Posterior vena cava (tissue), 2 donors: ENCODE measurements at regions of chr7 and their contacts with region 1.

Region 1: GRCh38 chr7:149005241-149006050 is 22.9 kb downstream of the PDIA4 start:
- DNase-seq: peak; percentile 94

Region 2: DNA sequence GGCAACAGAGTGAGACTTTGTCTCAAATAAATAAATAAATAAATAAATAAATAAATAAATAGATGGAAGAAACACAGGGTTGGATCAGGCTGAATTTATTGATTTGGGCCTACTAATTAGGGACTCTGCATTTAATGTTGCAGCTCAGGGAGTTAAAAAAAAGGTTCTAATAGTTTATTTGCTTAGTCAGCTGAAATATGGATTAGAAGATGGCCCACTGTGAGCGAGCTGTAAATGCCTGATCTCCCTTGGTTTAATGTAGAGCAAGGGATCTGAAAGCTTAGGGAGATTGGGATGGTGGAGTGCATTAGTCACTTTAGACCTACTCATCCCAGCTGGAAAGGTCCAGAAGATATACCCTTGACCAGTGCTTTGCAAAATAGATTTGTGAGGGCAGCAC is 47.9 kb after region 1 on chr7:
- intact Hi-C with region 1: loop called in 1 of 2 experiments (anchors 1 kb)
- DNase-seq: no peak

Region 3: DNA sequence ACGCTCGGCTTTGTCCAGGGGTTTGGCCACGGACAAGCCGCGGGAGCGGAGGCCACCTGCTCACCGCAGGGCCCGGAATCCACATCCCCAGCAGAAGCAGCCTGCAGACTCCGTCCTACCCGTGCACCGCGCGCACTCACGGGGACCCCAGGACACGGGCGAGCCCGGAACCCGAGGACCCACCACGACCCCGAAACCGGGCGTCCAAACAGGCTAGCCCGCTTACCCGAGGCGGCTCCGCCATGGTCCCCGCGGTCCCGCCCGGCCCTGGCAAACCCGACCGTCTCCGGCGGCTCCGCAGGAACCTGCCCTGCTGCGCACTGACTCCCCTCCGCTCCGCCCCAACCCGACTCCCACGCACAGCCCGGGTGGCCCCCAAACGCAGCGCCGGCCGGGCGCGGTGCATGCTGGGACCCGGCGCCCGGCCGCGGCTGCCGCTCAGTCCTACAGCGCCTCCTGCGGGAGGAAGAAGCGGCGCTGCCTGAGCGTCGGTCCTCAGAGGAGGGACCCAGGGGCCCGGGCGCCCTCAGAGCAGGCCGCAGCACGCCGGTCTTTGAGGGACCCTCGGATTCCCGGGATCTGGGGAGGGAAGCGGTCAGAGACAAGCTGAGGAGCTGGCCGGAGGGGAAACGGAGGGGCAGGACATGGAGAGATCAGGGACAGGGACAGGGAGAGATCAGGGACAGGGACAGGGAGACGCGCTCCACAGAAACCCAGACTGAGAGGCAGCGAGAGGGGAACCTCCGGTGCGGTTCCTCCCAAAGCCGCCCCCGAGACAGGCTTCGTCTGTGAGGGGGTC is 85.2 kb after region 1 on chr7 and contains the start of gene ZNF786:
- intact Hi-C with region 1: loop called (anchors 5 kb)
- DNase-seq: peak; percentile 96
- total RNA-seq, gene ZNF786: 3.4 to 4.6 TPM